Right ventricle myocardium inferior (tissue), 1 donor: ENCODE measurements at regions of chr7 and their contacts with region 1.

Region 1: GRCh38 chr7:30074422-30075030 is 46.3 kb downstream of the PLEKHA8 start:
- DNase-seq: no peak
- ATAC-seq: no peak

Region 2: GRCh38 chr7:29854257-29854938 is 220.1 kb before region 1 on chr7:
- intact Hi-C with region 1: no loop called
- DNase-seq: no peak
- ATAC-seq: no peak

Region 3: DNA sequence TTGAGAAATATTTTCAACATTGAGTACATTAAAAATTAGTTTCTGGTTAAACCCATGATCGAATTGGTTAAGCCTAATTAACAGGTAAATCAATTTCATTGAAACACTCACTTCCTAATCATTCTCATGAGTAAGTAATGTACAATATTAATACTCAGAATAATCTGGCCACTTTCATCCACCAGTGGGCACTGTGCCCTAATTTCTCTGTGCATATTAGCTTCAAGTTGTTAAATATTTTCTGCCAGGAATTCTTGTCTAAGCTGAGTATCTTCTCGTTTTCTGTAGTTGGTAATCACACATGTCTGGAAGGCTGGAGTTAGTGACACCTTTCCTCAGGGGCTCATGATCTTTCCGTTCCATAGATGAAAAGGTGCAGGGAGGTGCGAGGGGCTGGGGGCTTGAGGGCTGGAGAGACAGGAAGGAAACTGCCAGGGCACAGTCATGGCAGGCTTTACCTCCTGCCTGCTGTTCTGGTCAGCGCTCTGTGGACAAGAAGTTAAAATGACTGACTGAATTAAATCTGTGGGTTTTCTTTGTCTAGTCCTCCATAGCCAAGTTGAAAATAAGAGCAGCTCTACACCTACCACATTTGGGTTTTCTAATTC is 196.3 kb before region 1 on chr7:
- intact Hi-C with region 1: loop called (anchors 5 kb)
- DNase-seq: no peak
- ATAC-seq: no peak